K562 (cell line): ENCODE measurements at regions of chr3 and their contacts with region 1.

Region 1: GRCh38 chr3:142028243-142028777 is 121.0 kb downstream of the TFDP2 start:
- DNase-seq: peak; percentile 51 to 90 (median 62)
- ATAC-seq: peak; percentile 81
- H3K4me3 ChIP-seq: peak overlapping the region; percentile 61
- H3K27ac ChIP-seq: peak overlapping the region; percentile 82
- H3K4me1 ChIP-seq: peaks cover 5 to 6% of the 10 kb centered on the region in 2 experiments; a peak in 3 of 5 replicates
- H3K27me3 ChIP-seq: no peaks in the 10 kb centered on the region
- CTCF ChIP-seq: no peak
- EP300 ChIP-seq: peak; percentile 36; the same call in 1 of the 2 replicates
- POLR2A ChIP-seq: peak; percentile 72
- RAD21 ChIP-seq: no peak

Region 2: GRCh38 chr3:141105828-141106628 is 922.3 kb before region 1 on chr3:
- CTCF ChIA-PET with region 1: no interaction called
- POLR2A ChIA-PET with region 1: no interaction called
- in situ Hi-C with region 1: no loop called
- intact Hi-C with region 1: no loop called
- DNase-seq: peak; percentile 54 to 77 (median 58)
- ATAC-seq: peak; percentile 83
- H3K4me3 ChIP-seq: no peak overlapping the region
- H3K27ac ChIP-seq: no peak overlapping the region
- H3K4me1 ChIP-seq: no peaks in the 10 kb centered on the region
- H3K27me3 ChIP-seq: peaks cover 9 to 42% of the 10 kb centered on the region in 2 experiments; a peak in 4 of 5 replicates
- CTCF ChIP-seq: peak; percentile 75 to 82 (median 75)
- EP300 ChIP-seq: no peak
- POLR2A ChIP-seq: no peak
- RAD21 ChIP-seq: peak; percentile 68 to 83

Region 3: GRCh38 chr3:141998669-141999290 is 29.5 kb before region 1 on chr3:
- CTCF ChIA-PET with region 1: no interaction called
- POLR2A ChIA-PET with region 1: no interaction called
- in situ Hi-C with region 1: no loop called
- intact Hi-C with region 1: no loop called
- DNase-seq: no peak
- ATAC-seq: peak; percentile 61
- H3K4me3 ChIP-seq: no peak overlapping the region
- H3K27ac ChIP-seq: no peak overlapping the region
- H3K4me1 ChIP-seq: no peaks in the 10 kb centered on the region; a peak in 1 of 5 replicates
- H3K27me3 ChIP-seq: no peaks in the 10 kb centered on the region
- CTCF ChIP-seq: peak in 1 of 3 experiments; percentile 53; a peak in 2 of 6 replicates
- EP300 ChIP-seq: no peak
- POLR2A ChIP-seq: no peak
- RAD21 ChIP-seq: peak; percentile 55 to 56

Region 4: GRCh38 chr3:142046320-142047020 is 18.2 kb after region 1 on chr3:
- CTCF ChIA-PET with region 1: no interaction called
- POLR2A ChIA-PET with region 1: interaction called, 12 read pairs
- in situ Hi-C with region 1: no loop called
- intact Hi-C with region 1: loop called (anchors 1 kb)
- DNase-seq: peak; percentile 80 to 94 (median 86)
- ATAC-seq: peak; percentile 98
- H3K4me3 ChIP-seq: peak overlapping the region; percentile 24
- H3K27ac ChIP-seq: peak overlapping the region; percentile 92
- H3K4me1 ChIP-seq: peaks cover 20 to 23% of the 10 kb centered on the region in 2 experiments
- H3K27me3 ChIP-seq: no peaks in the 10 kb centered on the region
- CTCF ChIP-seq: no peak
- EP300 ChIP-seq: peak; percentile 96
- POLR2A ChIP-seq: no peak
- RAD21 ChIP-seq: 0 out of 4 replicates have a peak, but pooled peaks of 1 of the 2 experiments have one; percentile 15